CD8-positive, alpha-beta memory T cell (primary cell): ENCODE measurements at regions of chr12 and their contacts with region 1.

Region 1: GRCh38 chr12:110600254-110600653 is 13.7 kb upstream of the TCTN1 start:
- DNase-seq: peak in 2 of 5 donors; percentile 33 to 51
- H3K4me3 ChIP-seq: no peak overlapping the region
- H3K4me3 Mint-ChIP-seq: no peak overlapping the region
- H3K27ac ChIP-seq: no peak overlapping the region
- H3K27ac Mint-ChIP-seq: peak overlapping the region in 1 of 8 donors; percentile 1
- H3K4me1 ChIP-seq: no peaks in the 10 kb centered on the region
- H3K4me1 Mint-ChIP-seq: peaks cover 2 to 6% (median 5%) of the 10 kb centered on the region in 3 donors
- H3K27me3 ChIP-seq: no peaks in the 10 kb centered on the region
- H3K27me3 Mint-ChIP-seq: no peaks in the 10 kb centered on the region

Region 2: GRCh38 chr12:110431957-110432587 is 168.2 kb before region 1 on chr12:
- CTCF ChIA-PET with region 1: interaction called, 20 read pairs
- POLR2A ChIA-PET with region 1: no interaction called
- DNase-seq: no peak
- H3K4me3 ChIP-seq: no peak overlapping the region
- H3K4me3 Mint-ChIP-seq: peak overlapping the region in 3 of 7 donors; percentile 96 to 100 (median 97)
- H3K27ac ChIP-seq: no peak overlapping the region
- H3K27ac Mint-ChIP-seq: peak overlapping the region in 2 of 8 donors; percentile 6 to 89
- H3K4me1 ChIP-seq: no peaks in the 10 kb centered on the region
- H3K4me1 Mint-ChIP-seq: peaks cover 0 to 3% (median 3%) of the 10 kb centered on the region in 3 donors
- H3K27me3 ChIP-seq: no peaks in the 10 kb centered on the region
- H3K27me3 Mint-ChIP-seq: no peaks in the 10 kb centered on the region

Region 3: DNA sequence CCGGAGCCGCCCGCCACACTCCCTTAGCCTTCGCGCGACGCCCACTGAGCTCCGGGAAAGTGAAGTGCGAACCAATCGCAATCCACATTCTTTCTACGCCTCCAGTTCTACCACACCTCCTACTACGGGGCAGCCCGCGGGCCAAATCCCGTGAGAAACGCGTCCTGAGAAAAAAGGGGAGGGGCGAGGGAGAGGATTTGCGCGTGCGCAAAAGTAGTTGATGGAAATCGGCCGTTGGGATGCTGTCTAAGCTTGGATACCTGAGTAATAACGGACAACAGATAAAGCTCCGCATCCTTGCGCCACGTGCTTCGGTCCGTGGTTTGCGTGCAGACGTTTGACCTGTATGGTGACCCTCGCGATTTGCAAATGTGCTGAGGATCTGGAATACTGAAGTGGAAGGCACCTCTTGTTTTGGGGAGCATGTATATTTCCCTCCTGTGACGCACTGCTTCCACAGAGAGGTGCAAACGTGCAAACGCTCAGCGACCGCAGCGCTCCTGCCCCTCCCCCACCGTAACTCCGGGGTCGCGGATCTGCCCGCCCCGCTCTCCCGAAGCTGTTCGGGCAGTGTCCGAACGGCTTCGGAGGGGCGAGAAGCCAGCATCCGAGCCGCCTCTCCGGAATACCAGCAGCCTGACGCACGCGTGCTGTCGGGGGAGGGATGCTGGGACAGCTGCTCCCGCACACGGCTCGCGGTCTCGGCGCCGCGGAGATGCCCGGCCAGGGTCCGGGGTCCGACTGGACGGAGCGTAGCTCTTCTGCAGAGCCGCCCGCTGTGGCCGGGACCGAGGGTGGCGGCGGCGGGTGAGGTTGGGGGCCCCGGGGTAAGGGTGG is 131.8 kb before region 1 on chr12 and contains the starts of genes FAM216A and GPN3:
- CTCF ChIA-PET with region 1: interaction called, 24 read pairs
- POLR2A ChIA-PET with region 1: interaction called, 4 read pairs
- DNase-seq: peak; percentile 90 to 98 (median 96)
- H3K4me3 ChIP-seq: peak within 1 kb of the TSS; percentile 93
- H3K4me3 Mint-ChIP-seq: peak within 1 kb of the TSS; percentile 92 to 99 (median 98)
- H3K27ac ChIP-seq: peak within 1 kb of the TSS; percentile 78
- H3K27ac Mint-ChIP-seq: peak within 1 kb of the TSS; percentile 82 to 99 (median 98)
- H3K4me1 ChIP-seq: peaks cover 25% of the 10 kb centered on the region
- H3K4me1 Mint-ChIP-seq: peaks cover 18 to 45% (median 37%) of the 10 kb centered on the region in 3 donors
- H3K27me3 ChIP-seq: no peaks in the 10 kb centered on the region
- H3K27me3 Mint-ChIP-seq: peaks cover 0 to 2% of the 10 kb centered on the region in 2 donors
- total RNA-seq, gene FAM216A: 43.2 to 44.0 TPM
- total RNA-seq, gene GPN3: 59.4 TPM

Region 4: DNA sequence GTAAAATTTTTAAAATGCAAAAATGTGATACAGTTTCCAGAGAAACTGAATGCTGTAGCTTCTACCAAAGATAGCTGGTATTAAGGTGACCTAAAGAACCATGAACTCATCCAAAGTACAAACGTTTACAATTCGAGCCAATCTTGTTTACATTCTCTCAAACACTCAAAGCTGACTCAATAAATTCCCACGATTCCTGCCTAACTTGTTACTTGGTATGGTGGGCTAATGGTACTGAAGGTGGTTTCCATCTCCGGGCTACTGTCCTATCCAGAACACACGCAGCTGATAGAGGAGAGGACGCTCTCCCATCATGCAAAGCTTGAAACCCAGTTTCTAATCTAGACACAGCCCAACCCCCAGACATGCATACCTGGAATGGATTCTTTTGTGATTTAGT is 66.6 kb before region 1 on chr12:
- CTCF ChIA-PET with region 1: interaction called, 10 read pairs
- POLR2A ChIA-PET with region 1: no interaction called
- DNase-seq: no peak
- H3K4me3 ChIP-seq: no peak overlapping the region
- H3K4me3 Mint-ChIP-seq: no peak overlapping the region
- H3K27ac ChIP-seq: no peak overlapping the region
- H3K27ac Mint-ChIP-seq: peak overlapping the region in 1 of 8 donors; percentile 41
- H3K4me1 ChIP-seq: no peaks in the 10 kb centered on the region
- H3K4me1 Mint-ChIP-seq: peaks cover 5 to 14% (median 6%) of the 10 kb centered on the region in 3 donors
- H3K27me3 ChIP-seq: no peaks in the 10 kb centered on the region
- H3K27me3 Mint-ChIP-seq: no peaks in the 10 kb centered on the region

Region 5: GRCh38 chr12:110555577-110556406 is 44.5 kb before region 1 on chr12:
- CTCF ChIA-PET with region 1: interaction called, 154 read pairs
- POLR2A ChIA-PET with region 1: no interaction called
- DNase-seq: no peak
- H3K4me3 ChIP-seq: no peak overlapping the region
- H3K4me3 Mint-ChIP-seq: no peak overlapping the region
- H3K27ac ChIP-seq: no peak overlapping the region
- H3K27ac Mint-ChIP-seq: peak overlapping the region in 6 of 8 donors; percentile 22 to 61 (median 48)
- H3K4me1 ChIP-seq: peaks cover 22% of the 10 kb centered on the region
- H3K4me1 Mint-ChIP-seq: peaks cover 42 to 69% (median 52%) of the 10 kb centered on the region in 3 donors
- H3K27me3 ChIP-seq: no peaks in the 10 kb centered on the region
- H3K27me3 Mint-ChIP-seq: no peaks in the 10 kb centered on the region

Region 6: GRCh38 chr12:110585203-110585821 is 14.9 kb before region 1 on chr12:
- CTCF ChIA-PET with region 1: interaction called, 10 read pairs
- POLR2A ChIA-PET with region 1: interaction called, 4 read pairs
- DNase-seq: peak in 1 of 5 donors; percentile 41
- H3K4me3 ChIP-seq: peak overlapping the region; percentile 7
- H3K4me3 Mint-ChIP-seq: peak overlapping the region in 5 of 7 donors; percentile 38 to 70 (median 57)
- H3K27ac ChIP-seq: no peak overlapping the region
- H3K27ac Mint-ChIP-seq: peak overlapping the region in 7 of 8 donors; percentile 74 to 89 (median 77)
- H3K4me1 ChIP-seq: peaks cover 47% of the 10 kb centered on the region
- H3K4me1 Mint-ChIP-seq: peaks cover 37 to 49% (median 45%) of the 10 kb centered on the region in 3 donors
- H3K27me3 ChIP-seq: no peaks in the 10 kb centered on the region
- H3K27me3 Mint-ChIP-seq: peaks cover 0 to 1% of the 10 kb centered on the region in 2 donors

Region 7: GRCh38 chr12:110698171-110698902 is 98.1 kb after region 1 on chr12:
- CTCF ChIA-PET with region 1: interaction called, 18 read pairs
- POLR2A ChIA-PET with region 1: no interaction called
- DNase-seq: peak; percentile 54 to 83 (median 70)
- H3K4me3 ChIP-seq: no peak overlapping the region
- H3K4me3 Mint-ChIP-seq: peak overlapping the region in 1 of 7 donors; percentile 44
- H3K27ac ChIP-seq: peak overlapping the region; percentile 47
- H3K27ac Mint-ChIP-seq: peak overlapping the region in 3 of 8 donors; percentile 44 to 85 (median 78)
- H3K4me1 ChIP-seq: peaks cover 6% of the 10 kb centered on the region
- H3K4me1 Mint-ChIP-seq: peaks cover 5 to 7% (median 6%) of the 10 kb centered on the region in 3 donors
- H3K27me3 ChIP-seq: no peaks in the 10 kb centered on the region
- H3K27me3 Mint-ChIP-seq: no peaks in the 10 kb centered on the region

Region 8: GRCh38 chr12:110754101-110754793 is 154.0 kb after region 1 on chr12:
- CTCF ChIA-PET with region 1: no interaction called
- POLR2A ChIA-PET with region 1: no interaction called
- DNase-seq: no peak
- H3K4me3 ChIP-seq: no peak overlapping the region
- H3K4me3 Mint-ChIP-seq: no peak overlapping the region
- H3K27ac ChIP-seq: no peak overlapping the region
- H3K27ac Mint-ChIP-seq: peak overlapping the region in 2 of 8 donors; percentile 12 to 25
- H3K4me1 ChIP-seq: no peaks in the 10 kb centered on the region
- H3K4me1 Mint-ChIP-seq: no peaks in the 10 kb centered on the region
- H3K27me3 ChIP-seq: no peaks in the 10 kb centered on the region
- H3K27me3 Mint-ChIP-seq: peaks cover 0 to 1% of the 10 kb centered on the region in 2 donors